Aorta (tissue), 5 donors: ENCODE measurements at regions of chr7 and their contacts with region 1.

Region 1: DNA sequence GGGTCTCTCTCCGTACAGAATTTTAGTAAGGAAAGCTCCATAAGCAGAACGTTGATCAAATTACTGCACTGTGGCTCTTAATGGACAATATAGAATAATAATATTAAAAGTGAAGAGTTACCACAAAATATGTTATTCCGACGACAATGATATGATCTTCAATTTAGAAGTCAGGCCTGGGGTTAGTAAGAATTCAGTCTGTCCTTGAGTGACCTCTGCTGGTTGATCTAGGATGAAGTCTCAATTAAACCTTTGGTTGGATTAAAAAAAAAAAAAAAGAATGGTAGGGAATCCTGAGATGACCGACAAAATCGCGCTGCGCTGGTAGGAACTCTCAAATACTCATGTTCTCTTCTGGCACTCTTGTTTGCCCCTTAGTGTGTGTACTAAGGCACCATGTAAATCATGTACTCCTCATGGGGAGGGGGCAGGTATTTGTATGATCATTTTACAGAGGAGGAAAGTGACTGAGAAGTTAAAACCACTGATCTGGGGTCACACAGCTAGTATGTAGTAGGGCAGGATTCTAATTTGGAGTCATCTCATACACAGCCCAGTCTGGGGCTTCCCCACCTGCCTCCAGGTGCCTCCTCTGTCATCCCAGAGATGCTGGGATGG is 161.3 kb upstream of the NPVF start:
- DNase-seq: no peak
- ATAC-seq: peak; percentile 49
- H3K4me3 ChIP-seq: no peak overlapping the region
- H3K27ac ChIP-seq: no peak overlapping the region
- H3K4me1 ChIP-seq: peaks cover 0 to 4% of the 10 kb centered on the region in 2 donors
- H3K27me3 ChIP-seq: no peaks in the 10 kb centered on the region

Region 2: GRCh38 chr7:25259587-25260243 is 129.9 kb before region 1 on chr7:
- intact Hi-C with region 1: loop called (anchors 1 to 2 kb)
- DNase-seq: peak in 1 of 2 donors; percentile 59
- ATAC-seq: peak; percentile 70
- H3K4me3 ChIP-seq: no peak overlapping the region
- H3K27ac ChIP-seq: no peak overlapping the region
- H3K4me1 ChIP-seq: no peaks in the 10 kb centered on the region
- H3K27me3 ChIP-seq: no peaks in the 10 kb centered on the region

Region 3: DNA sequence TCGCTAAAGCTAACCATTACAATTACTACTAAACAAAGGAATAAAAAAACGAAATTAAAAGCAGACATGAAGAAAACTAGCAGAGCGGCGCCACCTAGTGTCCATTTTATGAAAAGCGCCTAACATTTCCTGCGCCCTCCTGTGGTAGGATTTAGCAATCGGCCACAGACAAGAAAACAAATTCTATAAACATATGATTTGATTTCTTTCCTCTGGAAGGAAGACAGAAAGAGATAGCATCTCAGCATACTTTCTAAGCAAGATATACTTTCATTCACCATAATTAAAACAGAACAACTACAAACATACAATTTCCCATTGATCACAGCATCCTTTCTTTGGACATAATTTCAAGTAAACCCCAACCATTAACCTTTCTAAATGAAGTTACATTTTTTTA is 176.4 kb after region 1 on chr7:
- intact Hi-C with region 1: loop called (anchors 1 to 2 kb)
- DNase-seq: peak in 1 of 2 donors; percentile 53
- ATAC-seq: peak; percentile 66
- H3K4me3 ChIP-seq: no peak overlapping the region
- H3K27ac ChIP-seq: no peak overlapping the region
- H3K4me1 ChIP-seq: peaks cover 0 to 3% of the 10 kb centered on the region in 2 donors
- H3K27me3 ChIP-seq: no peaks in the 10 kb centered on the region